ENCODE measurements at regions of chr16 and their contacts with region 1.

Region 1: GRCh38 chr16:23728112-23728477 is 15.1 kb upstream of the ERN2 start:
- DNase-seq: no peak
- H3K4me3 Mint-ChIP-seq: peak overlapping the region; percentile 24
- H3K27ac Mint-ChIP-seq: peak overlapping the region; percentile 5
- H3K4me1 Mint-ChIP-seq: peaks cover 20% of the 10 kb centered on the region
- H3K27me3 Mint-ChIP-seq: peaks cover 6% of the 10 kb centered on the region
- CTCF ChIP-seq: no peak

Region 2: DNA sequence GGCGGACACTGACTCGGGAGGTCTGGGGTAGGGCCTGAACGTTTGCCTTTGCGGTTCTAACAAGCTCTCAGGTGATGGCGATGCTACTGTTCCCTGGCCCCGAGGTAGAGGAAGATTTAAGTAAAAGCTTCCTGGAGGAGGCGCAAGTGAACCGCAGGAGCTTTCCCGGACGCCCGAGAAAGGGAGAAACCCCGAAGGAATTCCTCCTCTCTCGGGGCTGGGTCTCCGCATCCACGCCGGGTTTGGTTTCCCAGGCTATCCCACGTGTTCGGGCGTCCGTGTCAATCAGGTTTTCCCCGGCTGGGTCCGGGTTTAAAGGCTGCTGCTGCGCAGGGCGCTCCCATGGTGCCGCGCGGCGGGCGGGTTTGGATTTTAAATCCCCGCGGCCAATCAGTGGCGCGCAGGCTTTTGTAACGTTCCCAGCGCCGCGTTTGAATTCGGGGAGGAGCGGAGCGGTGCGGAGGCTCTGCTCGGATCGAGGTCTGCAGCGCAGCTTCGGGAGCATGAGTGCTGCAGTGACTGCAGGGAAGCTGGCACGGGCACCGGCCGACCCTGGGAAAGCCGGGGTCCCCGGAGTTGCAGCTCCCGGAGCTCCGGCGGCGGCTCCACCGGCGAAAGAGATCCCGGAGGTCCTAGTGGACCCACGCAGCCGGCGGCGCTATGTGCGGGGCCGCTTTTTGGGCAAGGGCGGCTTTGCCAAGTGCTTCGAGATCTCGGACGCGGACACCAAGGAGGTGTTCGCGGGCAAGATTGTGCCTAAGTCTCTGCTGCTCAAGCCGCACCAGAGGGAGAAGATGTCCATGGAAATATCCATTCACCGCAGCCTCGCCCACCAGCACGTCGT is 49.4 kb before region 1 on chr16 and contains the start of gene PLK1:
- CTCF ChIA-PET with region 1: interaction called, 19 read pairs
- intact Hi-C with region 1: loop called (anchors 1 kb)
- DNase-seq: peak; percentile 92
- H3K4me3 Mint-ChIP-seq: peak within 1 kb of the TSS; percentile 100
- H3K27ac Mint-ChIP-seq: peak within 1 kb of the TSS; percentile 97
- H3K4me1 Mint-ChIP-seq: peaks cover 34% of the 10 kb centered on the region
- H3K27me3 Mint-ChIP-seq: no peaks in the 10 kb centered on the region
- CTCF ChIP-seq: peak; percentile 34
- total RNA-seq, gene PLK1: 122 and 136 TPM in 2 replicates

Measured in Calu3 (cell line).